Activated CD4-positive, alpha-beta memory T cell treated with anti-CD3 and anti-CD28 coated beads for 36 hours (primary cell): ENCODE measurements at regions of chr1 and their contacts with region 1.

Region 1: GRCh38 chr1:165768513-165769394 is at the start of gene TMCO1:
- DNase-seq: peak; percentile 96
- H3K4me3 Mint-ChIP-seq: peak within 1 kb of the TSS; percentile 99
- H3K27ac Mint-ChIP-seq: peak within 1 kb of the TSS; percentile 99
- H3K4me1 Mint-ChIP-seq: peaks cover 57% of the 10 kb centered on the region
- H3K27me3 Mint-ChIP-seq: no peaks in the 10 kb centered on the region
- total RNA-seq, gene TMCO1: 73.2 to 76.7 TPM

Region 2: DNA sequence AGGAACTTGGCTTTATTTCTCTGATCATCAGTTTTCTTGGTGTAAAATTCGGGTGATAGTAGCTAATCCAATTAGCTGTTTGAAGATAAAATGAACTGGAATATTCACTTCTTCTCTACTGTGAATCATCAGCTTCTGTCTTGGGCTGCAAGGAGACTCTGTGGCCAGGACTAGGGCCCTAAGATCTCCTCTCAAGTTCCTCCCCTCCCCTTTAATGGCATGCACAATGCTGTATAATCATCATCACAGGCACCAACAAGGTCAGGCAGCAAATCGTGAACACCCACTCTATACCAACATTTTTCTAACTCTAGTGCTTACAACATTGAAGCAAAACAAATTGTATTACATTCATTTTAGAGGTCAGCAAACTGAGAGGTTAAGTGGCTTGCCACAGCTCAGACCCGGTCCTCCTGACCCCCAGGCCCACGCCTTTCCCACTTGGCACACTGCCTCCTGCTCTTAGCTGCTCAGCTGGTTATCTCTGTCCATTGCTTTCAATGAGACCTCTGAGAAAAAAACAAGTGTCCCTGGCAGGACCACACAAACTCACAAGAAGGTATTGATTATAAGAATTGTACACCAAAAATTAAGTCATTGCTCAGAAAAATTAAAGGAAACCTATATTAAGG is 193.2 kb before region 1 on chr1:
- CTCF ChIA-PET with region 1: no interaction called
- POLR2A ChIA-PET with region 1: no interaction called
- intact Hi-C with region 1: no loop called
- DNase-seq: no peak
- H3K4me3 Mint-ChIP-seq: no peak overlapping the region
- H3K27ac Mint-ChIP-seq: no peak overlapping the region
- H3K4me1 Mint-ChIP-seq: no peaks in the 10 kb centered on the region
- H3K27me3 Mint-ChIP-seq: peaks cover 8% of the 10 kb centered on the region

Region 3: DNA sequence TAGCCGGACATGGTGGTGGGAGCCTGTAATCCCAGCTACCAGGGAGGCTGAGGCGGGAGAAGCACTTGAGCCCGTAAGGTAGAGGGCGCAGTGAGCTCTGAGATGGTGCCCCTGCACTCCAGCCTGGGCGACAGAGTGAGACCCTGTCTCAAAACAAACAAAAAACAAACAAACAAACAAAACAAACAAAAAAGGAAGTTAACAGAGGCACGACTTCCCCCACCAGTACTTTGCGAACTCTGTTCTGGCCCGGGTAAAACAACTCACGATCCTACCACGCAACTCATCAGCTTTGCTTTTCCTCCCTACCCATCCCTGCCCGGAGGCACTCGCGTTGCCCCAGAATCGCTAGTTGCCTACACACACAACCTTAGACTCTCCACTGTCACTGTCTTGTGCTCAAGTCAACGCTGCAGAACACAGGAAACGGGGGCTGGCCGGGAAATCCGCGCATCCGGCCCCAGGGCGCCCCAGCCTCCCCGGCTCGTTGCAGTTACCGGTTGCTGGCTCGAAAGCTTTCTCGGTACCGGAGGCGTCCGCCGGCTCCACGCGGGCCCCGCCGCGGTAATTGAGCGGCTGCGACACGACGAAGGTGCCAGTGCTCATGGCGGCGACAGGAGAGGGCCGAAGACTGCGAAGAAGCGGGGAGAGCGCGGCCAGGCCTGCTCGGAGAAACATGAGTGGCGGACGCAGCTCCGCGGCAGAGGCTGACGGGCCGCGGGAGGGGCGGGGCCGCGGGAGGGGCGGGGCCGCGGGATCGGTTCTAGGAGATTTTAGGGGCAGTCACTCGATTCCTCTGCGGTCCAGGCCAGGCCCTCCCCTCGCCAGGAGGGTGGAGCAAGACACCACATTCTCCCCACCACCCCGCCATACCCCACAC is 70.6 kb before region 1 on chr1 and contains the start of gene ALDH9A1:
- CTCF ChIA-PET with region 1: interaction called, 8 read pairs
- POLR2A ChIA-PET with region 1: interaction called, 17 read pairs
- intact Hi-C with region 1: loop called (anchors 1 kb)
- DNase-seq: peak; percentile 93
- H3K4me3 Mint-ChIP-seq: peak within 1 kb of the TSS; percentile 100
- H3K27ac Mint-ChIP-seq: peak within 1 kb of the TSS; percentile 99
- H3K4me1 Mint-ChIP-seq: peaks cover 25% of the 10 kb centered on the region
- H3K27me3 Mint-ChIP-seq: no peaks in the 10 kb centered on the region
- total RNA-seq, gene ALDH9A1: 34.1 to 43.2 TPM

Region 4: GRCh38 chr1:165871311-165872067 is 102.7 kb after region 1 on chr1:
- CTCF ChIA-PET with region 1: interaction called, 5 read pairs
- POLR2A ChIA-PET with region 1: interaction called, 5 read pairs
- intact Hi-C with region 1: loop called (anchors 2 kb)
- DNase-seq: peak; percentile 76
- H3K4me3 Mint-ChIP-seq: no peak overlapping the region
- H3K27ac Mint-ChIP-seq: peak overlapping the region; percentile 20
- H3K4me1 Mint-ChIP-seq: peaks cover 34% of the 10 kb centered on the region
- H3K27me3 Mint-ChIP-seq: no peaks in the 10 kb centered on the region

Region 5: GRCh38 chr1:166083887-166084286 is 315.1 kb after region 1 on chr1:
- CTCF ChIA-PET with region 1: no interaction called
- POLR2A ChIA-PET with region 1: no interaction called
- intact Hi-C with region 1: loop called (anchors 2 kb)
- DNase-seq: peak; percentile 41
- H3K4me3 Mint-ChIP-seq: no peak overlapping the region
- H3K27ac Mint-ChIP-seq: peak overlapping the region; percentile 29
- H3K4me1 Mint-ChIP-seq: peaks cover 40% of the 10 kb centered on the region
- H3K27me3 Mint-ChIP-seq: no peaks in the 10 kb centered on the region

Region 6: GRCh38 chr1:166859597-166859996 is 1090.8 kb after region 1 on chr1:
- CTCF ChIA-PET with region 1: no interaction called
- POLR2A ChIA-PET with region 1: no interaction called
- intact Hi-C with region 1: loop called (anchors 10 kb)
- DNase-seq: no peak
- H3K4me3 Mint-ChIP-seq: no peak overlapping the region
- H3K27ac Mint-ChIP-seq: peak overlapping the region; percentile 9
- H3K4me1 Mint-ChIP-seq: peaks cover 14% of the 10 kb centered on the region
- H3K27me3 Mint-ChIP-seq: no peaks in the 10 kb centered on the region